ENCODE measurements at regions of chr19 and their contacts with region 1.

Region 1: GRCh38 chr19:37779127-37780005 is at the start of gene ZNF573:
- DNase-seq: peak; percentile 84
- ATAC-seq: peak; percentile 95
- H3K4me3 Mint-ChIP-seq: peak within 1 kb of the TSS; percentile 94
- H3K27ac Mint-ChIP-seq: peak within 1 kb of the TSS; percentile 96
- H3K4me1 Mint-ChIP-seq: peaks cover 3% of the 10 kb centered on the region; the same call in 1 of the 2 replicates
- H3K27me3 Mint-ChIP-seq: no peaks in the 10 kb centered on the region
- CTCF ChIP-seq: no peak
- total RNA-seq, gene ZNF573: 12.4 to 14.9 TPM (median 12.7 TPM) in 3 replicates

Region 2: GRCh38 chr19:37719111-37719926 is 60.0 kb before region 1 on chr19 and contains the start of gene ZNF607:
- CTCF ChIA-PET with region 1: interaction called, 13 read pairs
- POLR2A ChIA-PET with region 1: no interaction called
- DNase-seq: peak; percentile 95
- ATAC-seq: peak; percentile 99
- H3K4me3 Mint-ChIP-seq: peak within 1 kb of the TSS; percentile 89
- H3K27ac Mint-ChIP-seq: peak within 1 kb of the TSS; percentile 75
- H3K4me1 Mint-ChIP-seq: peaks cover 24% of the 10 kb centered on the region
- H3K27me3 Mint-ChIP-seq: no peaks in the 10 kb centered on the region
- CTCF ChIP-seq: peak; percentile 27; the same call in 1 of the 2 replicates
- total RNA-seq, gene ZNF607: 17.5 to 21.2 TPM (median 20.7 TPM) in 3 replicates

Region 3: DNA sequence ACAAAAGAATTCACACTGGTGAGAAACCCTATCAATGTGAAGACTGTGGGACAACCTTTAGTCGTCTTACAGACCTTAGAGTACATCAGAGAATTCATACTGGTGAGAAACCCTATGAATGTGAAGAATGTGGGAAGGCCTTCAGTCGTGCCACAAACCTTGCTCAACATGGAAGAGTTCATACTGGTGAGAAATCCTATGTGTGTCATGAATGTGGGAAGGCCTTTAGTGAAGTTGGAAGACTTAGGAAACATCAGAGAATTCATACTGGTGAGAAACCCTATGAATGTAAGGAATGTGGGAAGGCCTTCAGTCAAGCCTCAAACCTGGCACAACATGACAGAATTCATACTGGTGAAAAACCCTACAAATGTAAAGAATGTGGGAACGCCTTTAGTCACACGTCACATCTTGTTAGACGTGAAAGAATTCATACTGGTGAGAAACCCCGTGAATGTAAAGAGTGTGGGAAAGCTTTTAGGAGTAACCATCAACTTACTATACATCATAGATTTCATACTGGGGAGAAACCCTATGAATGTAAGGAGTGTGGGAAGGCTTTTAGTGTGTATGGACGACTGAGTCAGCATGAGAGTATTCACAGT is 24.0 kb after region 1 on chr19:
- CTCF ChIA-PET with region 1: no interaction called
- POLR2A ChIA-PET with region 1: no interaction called
- DNase-seq: no peak
- ATAC-seq: no peak
- H3K4me3 Mint-ChIP-seq: no peak overlapping the region
- H3K27ac Mint-ChIP-seq: no peak overlapping the region
- H3K4me1 Mint-ChIP-seq: no peaks in the 10 kb centered on the region
- H3K27me3 Mint-ChIP-seq: peaks cover 18% of the 10 kb centered on the region
- CTCF ChIP-seq: no peak

Region 4: GRCh38 chr19:37953533-37954303 is 174.4 kb after region 1 on chr19:
- CTCF ChIA-PET with region 1: no interaction called
- POLR2A ChIA-PET with region 1: no interaction called
- DNase-seq: no peak
- ATAC-seq: peak; percentile 35
- H3K4me3 Mint-ChIP-seq: no peak overlapping the region
- H3K27ac Mint-ChIP-seq: peak overlapping the region; percentile 89
- H3K4me1 Mint-ChIP-seq: peaks cover 40% of the 10 kb centered on the region
- H3K27me3 Mint-ChIP-seq: no peaks in the 10 kb centered on the region
- CTCF ChIP-seq: no peak